ENCODE measurements at regions of chr11 and their contacts with region 1.

Region 1: DNA sequence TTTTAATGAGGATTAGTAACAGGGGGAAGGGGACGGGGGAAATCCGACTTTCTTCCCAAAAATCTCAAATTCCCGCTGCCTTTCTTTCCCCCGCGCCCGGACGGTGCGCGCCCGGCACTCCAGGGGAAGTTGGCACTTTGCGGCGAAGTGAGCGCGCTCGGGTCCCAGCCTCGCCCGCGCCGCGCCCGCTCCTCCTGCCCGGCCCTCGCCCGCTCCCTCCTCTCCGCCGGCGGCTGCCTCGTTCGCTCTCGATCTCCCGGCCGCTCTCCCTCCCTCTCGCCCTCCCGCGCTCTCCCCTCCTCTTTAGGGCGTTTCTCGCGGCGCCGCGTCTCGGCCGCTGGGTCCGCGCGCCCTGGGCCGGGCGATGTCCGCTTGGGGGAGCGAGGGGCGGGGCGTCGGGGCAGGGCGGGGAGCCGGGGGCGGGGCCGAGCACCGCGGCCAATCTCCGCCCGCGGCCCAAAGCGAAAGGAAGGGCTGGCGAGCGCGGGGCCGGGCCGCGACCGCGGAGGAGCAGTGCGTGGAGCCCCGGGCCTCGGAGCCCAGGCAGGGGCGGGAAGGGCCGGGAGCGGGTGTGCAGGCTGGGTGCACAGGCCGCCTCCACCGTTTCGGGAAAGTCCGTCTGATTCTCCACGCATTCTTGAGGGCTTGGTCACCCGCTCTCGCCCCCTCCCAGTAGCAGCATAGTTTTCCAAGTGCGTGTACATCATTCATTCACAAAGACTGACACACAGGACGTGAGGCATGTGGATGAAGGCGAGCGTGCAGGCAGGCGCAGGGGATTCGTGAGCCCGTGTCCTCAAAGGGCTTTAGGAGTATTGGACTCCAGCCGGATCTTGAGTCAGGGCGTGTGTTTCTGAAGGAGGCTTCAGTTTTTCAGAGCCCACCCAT is 65.1 kb downstream of the ETS1 start:
- DNase-seq: peak; percentile 97
- H3K4me3 ChIP-seq: peak overlapping the region; percentile 68 to 98 (median 97)
- H3K27ac ChIP-seq: peak overlapping the region; percentile 99
- H3K4me1 ChIP-seq: peaks cover 52% of the 10 kb centered on the region
- H3K27me3 ChIP-seq: no peaks in the 10 kb centered on the region
- CTCF ChIP-seq: no peak
- POLR2A ChIP-seq: peak; percentile 69

Region 2: DNA sequence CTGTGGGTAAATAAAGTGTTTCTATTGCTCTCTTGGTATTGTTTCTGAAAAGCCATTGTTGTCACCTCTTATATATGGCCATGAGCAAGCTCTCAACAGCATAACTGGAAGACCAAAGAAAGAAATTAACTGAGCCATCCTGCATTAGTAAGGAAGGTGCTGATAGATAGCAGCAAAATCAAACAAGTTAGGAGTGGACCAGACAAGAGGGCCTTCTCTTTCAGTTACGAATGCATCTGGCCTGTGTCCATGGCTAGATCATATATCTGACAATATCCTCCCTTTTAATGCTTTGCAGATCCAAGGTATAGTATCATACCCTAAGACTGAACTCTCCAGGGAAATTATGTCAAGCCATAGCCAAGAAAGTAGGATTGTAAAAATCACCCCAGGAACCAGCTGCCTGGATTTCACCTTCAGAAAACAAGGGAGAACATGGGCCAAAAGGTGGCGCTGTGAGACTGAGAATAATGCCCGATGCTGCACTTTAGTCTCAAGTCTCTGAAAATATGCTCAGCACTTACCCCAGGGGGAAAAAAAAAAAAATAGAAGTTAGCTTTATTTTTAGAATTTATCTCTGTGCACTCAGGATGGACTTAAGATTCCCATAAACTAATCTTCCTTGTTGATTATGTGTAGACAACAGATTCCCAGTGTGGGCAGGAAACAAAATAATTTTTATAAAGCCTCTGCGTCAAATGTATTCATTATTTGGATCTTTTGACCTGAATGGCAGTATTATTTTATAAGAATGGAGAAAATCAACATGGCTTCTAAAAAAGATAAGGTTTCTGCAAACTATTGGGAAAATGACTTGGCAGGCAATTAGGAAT is 350.0 kb before region 1 on chr11:
- CTCF ChIA-PET with region 1: interaction called, 5 read pairs
- POLR2A ChIA-PET with region 1: no interaction called
- dilution Hi-C with region 1: no loop called
- intact Hi-C with region 1: loop called (anchors 2 kb)
- DNase-seq: peak; percentile 91
- H3K4me3 ChIP-seq: no peak overlapping the region
- H3K27ac ChIP-seq: peak overlapping the region; percentile 42
- H3K4me1 ChIP-seq: peaks cover 9% of the 10 kb centered on the region
- H3K27me3 ChIP-seq: no peaks in the 10 kb centered on the region
- CTCF ChIP-seq: peak; percentile 64 to 74
- POLR2A ChIP-seq: no peak

Region 3: DNA sequence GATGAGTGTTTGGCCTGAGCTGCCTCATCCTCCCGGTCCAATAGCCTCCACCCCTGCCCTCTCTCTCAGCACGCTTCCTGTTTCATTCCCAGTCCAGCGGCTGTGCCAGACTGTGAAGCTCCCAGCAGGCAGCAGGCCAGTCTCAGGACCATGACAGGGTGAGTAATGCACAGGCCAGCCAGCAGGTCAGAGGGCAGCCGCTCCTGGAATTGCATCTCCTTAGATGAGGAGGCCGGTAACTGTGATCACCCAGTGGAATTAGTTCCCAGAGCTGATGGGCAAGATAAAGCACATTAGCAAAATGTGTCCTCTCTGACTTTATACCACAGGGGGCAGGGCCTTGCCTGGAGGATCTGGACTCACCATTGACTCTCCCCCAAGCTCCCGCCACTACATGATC is 186.1 kb before region 1 on chr11:
- CTCF ChIA-PET with region 1: interaction called, 3 read pairs
- POLR2A ChIA-PET with region 1: interaction called, 15 read pairs
- dilution Hi-C with region 1: no loop called
- intact Hi-C with region 1: loop called (anchors 1 kb)
- DNase-seq: peak; percentile 88
- H3K4me3 ChIP-seq: no peak overlapping the region
- H3K27ac ChIP-seq: peak overlapping the region; percentile 87
- H3K4me1 ChIP-seq: peaks cover 43% of the 10 kb centered on the region
- H3K27me3 ChIP-seq: no peaks in the 10 kb centered on the region
- CTCF ChIP-seq: no peak
- POLR2A ChIP-seq: peak; percentile 17

Region 4: GRCh38 chr11:128497061-128497775 is 25.1 kb before region 1 on chr11:
- CTCF ChIA-PET with region 1: interaction called, 10 read pairs
- POLR2A ChIA-PET with region 1: no interaction called
- dilution Hi-C with region 1: no loop called
- intact Hi-C with region 1: loop called (anchors 1 kb)
- DNase-seq: peak; percentile 96
- H3K4me3 ChIP-seq: peak overlapping the region in 1 of 3 experiments; percentile 28
- H3K27ac ChIP-seq: peak overlapping the region; percentile 94
- H3K4me1 ChIP-seq: peaks cover 67% of the 10 kb centered on the region
- H3K27me3 ChIP-seq: no peaks in the 10 kb centered on the region
- CTCF ChIP-seq: no peak
- POLR2A ChIP-seq: no peak

Region 5: GRCh38 chr11:128575961-128576350 is 53.7 kb after region 1 on chr11:
- CTCF ChIA-PET with region 1: no interaction called
- POLR2A ChIA-PET with region 1: no interaction called
- dilution Hi-C with region 1: no loop called
- intact Hi-C with region 1: loop called (anchors 1 kb)
- DNase-seq: peak; percentile 96
- H3K4me3 ChIP-seq: no peak overlapping the region
- H3K27ac ChIP-seq: peak overlapping the region; percentile 84
- H3K4me1 ChIP-seq: peaks cover 43% of the 10 kb centered on the region
- H3K27me3 ChIP-seq: no peaks in the 10 kb centered on the region
- CTCF ChIP-seq: no peak
- POLR2A ChIP-seq: peak; percentile 28

Region 6: DNA sequence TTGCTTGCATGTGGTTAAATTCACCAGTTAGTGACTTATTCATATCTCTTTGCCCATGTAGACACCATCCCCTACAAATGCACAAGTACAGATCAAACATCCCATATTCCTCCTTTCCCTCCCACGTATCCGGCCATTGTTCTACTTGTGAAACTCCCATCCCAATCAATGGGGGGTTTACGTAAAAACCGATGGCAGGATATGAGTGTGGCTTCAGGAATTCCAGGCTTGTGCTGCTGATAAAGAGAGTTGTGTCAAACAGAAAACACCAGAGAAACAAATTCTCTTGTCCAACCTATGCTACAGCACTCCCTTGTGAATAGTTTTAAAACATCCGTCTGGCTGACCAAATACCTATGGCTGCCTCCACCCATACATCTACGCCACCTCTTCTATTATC is 187.1 kb after region 1 on chr11:
- CTCF ChIA-PET with region 1: interaction called, 3 read pairs
- POLR2A ChIA-PET with region 1: no interaction called
- dilution Hi-C with region 1: no loop called
- intact Hi-C with region 1: loop called (anchors 2 kb)
- DNase-seq: peak; percentile 99
- H3K4me3 ChIP-seq: no peak overlapping the region
- H3K27ac ChIP-seq: peak overlapping the region; percentile 97
- H3K4me1 ChIP-seq: peaks cover 88% of the 10 kb centered on the region
- H3K27me3 ChIP-seq: no peaks in the 10 kb centered on the region
- CTCF ChIP-seq: peak in 1 of 2 donors; percentile 5
- POLR2A ChIP-seq: peak; percentile 85

Measured in endothelial cell of umbilical vein (primary cell).